RWPE1 (cell line): ENCODE measurements at regions of chr2 and their contacts with region 1.

Region 1: DNA sequence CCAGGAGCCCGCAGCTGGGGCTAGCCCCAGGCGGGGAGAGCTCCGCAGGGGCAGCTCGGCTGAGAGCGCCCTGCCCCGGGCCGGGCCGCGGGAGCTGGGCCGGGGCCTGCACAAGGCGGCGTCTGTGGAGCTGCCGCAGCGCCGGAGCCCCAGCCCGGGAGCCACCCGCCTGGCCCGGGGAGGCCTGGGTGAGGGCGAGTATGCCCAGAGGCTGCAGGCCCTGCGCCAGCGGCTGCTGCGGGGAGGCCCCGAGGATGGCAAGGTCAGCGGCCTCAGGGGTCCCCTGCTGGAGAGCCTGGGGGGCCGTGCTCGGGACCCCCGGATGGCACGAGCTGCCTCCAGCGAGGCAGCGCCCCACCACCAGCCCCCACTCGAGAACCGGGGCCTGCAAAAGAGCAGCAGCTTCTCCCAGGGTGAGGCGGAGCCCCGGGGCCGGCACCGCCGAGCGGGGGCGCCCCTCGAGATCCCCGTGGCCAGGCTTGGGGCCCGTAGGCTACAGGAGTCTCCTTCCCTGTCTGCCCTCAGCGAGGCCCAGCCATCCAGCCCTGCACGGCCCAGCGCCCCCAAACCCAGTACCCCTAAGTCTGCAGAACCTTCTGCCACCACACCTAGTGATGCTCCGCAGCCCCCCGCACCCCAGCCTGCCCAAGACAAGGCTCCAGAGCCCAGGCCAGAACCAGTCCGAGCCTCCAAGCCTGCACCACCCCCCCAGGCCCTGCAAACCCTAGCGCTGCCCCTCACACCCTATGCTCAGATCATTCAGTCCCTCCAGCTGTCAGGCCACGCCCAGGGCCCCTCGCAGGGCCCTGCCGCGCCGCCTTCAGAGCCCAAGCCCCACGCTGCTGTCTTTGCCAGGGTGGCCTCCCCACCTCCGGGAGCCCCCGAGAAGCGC is 15.0 kb upstream of the GMPPA start:
- DNase-seq: no peak
- H3K27ac ChIP-seq: no peak overlapping the region
- CTCF ChIP-seq: no peak

Region 2: DNA sequence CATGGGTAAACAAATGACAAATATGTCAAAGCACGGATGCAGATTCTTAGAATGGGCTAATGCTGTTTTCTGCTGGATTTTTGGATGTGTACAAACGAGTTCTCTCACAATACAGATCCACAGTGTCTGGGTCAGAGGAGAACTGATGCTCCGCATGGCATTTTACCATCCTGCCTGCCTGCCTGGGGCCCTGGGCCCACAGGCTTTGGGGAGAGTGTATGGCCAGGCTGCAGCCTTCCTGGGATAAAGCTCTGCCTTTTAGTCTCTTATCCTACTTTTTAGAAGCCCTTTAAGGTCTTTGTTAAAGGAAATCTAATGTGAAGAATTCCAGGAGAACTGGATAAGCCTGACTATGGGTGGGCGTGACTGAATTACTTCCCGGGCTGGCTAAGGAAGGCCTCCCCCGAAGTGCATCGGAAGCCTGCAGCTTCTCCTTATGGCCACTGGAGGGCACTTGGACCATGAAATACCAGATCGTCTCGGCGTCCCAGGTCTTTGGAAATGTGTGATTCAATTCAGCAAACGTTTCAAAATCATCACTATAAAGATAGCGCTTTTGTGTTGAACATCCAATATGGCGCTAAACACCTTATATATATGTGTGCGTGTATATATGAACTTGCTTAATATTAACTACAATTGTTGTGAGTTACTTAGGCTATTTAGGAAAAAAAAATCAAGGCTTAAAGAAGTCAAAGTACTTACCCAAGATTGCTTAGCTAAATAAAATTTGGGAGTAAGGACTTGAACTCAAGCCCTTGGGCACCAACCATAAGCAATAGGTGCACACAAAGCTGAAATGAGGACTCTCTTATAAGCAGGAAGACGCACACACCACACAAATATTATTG is 80.8 kb before region 1 on chr2:
- CTCF ChIA-PET with region 1: interaction called, 10 read pairs
- POLR2A ChIA-PET with region 1: no interaction called
- DNase-seq: peak; percentile 76
- H3K27ac ChIP-seq: no peak overlapping the region
- CTCF ChIP-seq: peak; percentile 92

Region 3: DNA sequence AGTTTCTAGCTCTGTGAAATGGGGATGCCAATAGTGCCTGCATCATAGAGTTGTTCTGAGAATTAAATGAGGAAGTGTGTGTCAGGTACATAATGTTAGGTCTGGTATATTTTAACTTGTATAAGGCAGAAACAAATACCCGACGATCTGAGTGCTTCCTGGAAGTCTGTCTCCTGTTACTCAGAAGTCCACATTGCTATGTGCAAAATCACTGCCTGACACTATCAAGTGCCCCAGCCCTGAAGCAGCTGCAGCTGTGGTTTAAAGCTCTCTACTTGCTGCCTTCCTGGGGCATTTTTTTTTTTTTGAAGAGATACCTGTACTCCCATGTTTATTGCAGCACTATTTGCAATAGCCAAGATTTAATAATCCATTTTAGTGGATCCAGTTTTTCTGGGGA is 269.0 kb after region 1 on chr2:
- CTCF ChIA-PET with region 1: no interaction called
- POLR2A ChIA-PET with region 1: no interaction called
- DNase-seq: no peak
- H3K27ac ChIP-seq: no peak overlapping the region
- CTCF ChIP-seq: no peak